ENCODE measurements at regions of chr2 and their contacts with region 1.

Region 1: DNA sequence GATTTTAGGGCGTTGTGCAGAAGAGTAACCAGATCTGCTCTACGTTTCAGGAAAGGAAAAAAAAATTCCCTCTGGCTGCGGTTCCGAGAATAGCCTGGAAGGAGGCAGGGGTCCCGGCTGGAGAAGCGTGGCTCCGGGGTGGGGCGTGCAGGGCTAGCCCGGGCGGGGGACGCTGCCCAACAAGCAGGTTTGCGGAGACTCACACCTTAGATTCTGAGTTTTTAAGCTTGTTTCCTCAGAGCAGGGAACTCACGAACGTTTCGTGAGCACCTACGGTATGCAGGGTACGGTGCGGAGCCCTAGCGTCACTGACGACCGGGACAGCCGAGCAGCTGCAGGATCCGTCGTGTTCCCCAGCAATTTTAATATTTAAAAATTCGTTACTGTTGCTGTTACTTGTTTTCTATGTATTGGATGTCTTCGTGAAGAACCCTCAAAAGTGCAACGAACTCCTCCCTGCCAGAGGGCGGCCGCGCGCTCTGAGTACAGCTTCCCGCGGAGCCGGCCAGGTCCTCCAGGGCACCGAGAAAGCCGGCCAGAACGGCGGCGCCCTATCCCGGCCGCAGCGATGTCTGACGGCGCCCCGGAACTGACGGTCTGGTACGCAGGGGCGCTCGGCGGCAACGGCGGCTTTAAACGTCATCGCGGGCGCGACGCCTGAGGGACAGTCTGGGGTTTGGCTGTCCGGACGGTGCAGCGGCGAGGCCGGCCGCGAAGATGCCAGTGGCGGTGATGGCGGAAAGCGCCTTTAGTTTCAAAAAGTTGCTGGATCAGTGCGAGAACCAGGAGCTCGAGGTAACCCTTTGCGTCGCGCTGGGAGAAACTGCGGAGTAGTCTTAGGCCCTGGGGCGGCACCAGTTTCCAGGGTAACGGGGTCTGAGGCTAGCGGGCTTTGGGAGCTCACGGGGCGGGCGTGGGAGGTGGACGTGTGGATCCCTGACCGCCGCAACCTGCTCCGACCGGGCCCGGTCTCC is at the start of gene COPS8:
- DNase-seq: peak; percentile 95
- H3K4me3 Mint-ChIP-seq: peak within 1 kb of the TSS; percentile 98
- H3K27ac Mint-ChIP-seq: peak within 1 kb of the TSS; percentile 98
- H3K4me1 Mint-ChIP-seq: peaks cover 17% of the 10 kb centered on the region
- H3K27me3 Mint-ChIP-seq: peaks cover 4% of the 10 kb centered on the region

Region 2: DNA sequence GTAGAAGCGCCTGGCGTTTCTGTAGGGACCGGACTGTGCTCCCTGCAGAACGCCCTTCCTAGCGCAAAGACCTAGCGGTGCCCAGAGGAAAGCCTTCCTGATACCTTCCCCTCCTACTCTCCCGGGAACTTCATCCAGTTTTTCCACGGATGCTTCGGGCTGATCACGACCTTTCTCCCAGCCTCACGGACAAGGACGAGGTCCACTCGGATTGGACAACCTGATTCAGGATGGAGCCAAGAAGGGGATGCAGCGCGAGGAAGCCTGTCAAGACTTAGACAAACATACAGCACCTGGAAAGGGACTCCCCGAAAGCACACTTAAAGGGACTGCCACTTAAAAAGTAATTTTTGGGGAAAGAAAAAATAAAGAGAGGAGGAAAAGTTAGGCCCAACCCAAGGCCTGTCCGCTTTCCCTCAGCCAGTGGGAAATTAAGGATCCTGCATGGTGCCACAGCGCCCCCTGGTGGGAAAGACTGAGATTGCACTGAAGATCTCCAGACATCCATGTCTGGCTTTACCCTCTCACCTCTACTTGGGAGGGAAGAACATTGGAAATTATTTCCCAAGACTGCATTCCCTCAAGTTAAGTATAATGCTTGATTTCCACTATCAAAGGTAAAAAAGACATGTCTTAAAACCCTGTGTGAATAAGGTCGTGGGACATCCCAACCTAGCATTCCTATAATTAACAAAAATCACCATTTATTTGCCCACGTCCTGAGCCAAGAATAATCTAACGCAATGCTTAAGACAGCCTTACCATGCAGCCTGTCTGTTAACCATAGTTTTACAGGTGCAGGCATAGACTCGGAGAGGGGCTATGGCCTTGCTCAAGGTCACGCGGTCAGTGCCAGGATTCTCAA is 13.2 kb before region 1 on chr2:
- CTCF ChIA-PET with region 1: interaction called, 15 read pairs
- DNase-seq: peak; percentile 79
- H3K4me3 Mint-ChIP-seq: no peak overlapping the region
- H3K27ac Mint-ChIP-seq: no peak overlapping the region
- H3K4me1 Mint-ChIP-seq: no peaks in the 10 kb centered on the region
- H3K27me3 Mint-ChIP-seq: peaks cover 4% of the 10 kb centered on the region